ENCODE measurements at regions of chr11 and their contacts with region 1.

Region 1: GRCh38 chr11:74492974-74493790 is at the start of gene LIPT2:
- DNase-seq: peak; percentile 94
- ATAC-seq: peak; percentile 95
- H3K4me3 Mint-ChIP-seq: peak within 1 kb of the TSS; percentile 85
- H3K27ac Mint-ChIP-seq: peak within 1 kb of the TSS; percentile 85
- H3K4me1 Mint-ChIP-seq: peaks cover 19% of the 10 kb centered on the region
- H3K27me3 Mint-ChIP-seq: no peaks in the 10 kb centered on the region
- CTCF ChIP-seq: no peak
- total RNA-seq, gene LIPT2: 4.1 and 5.4 TPM in 2 replicates

Region 2: DNA sequence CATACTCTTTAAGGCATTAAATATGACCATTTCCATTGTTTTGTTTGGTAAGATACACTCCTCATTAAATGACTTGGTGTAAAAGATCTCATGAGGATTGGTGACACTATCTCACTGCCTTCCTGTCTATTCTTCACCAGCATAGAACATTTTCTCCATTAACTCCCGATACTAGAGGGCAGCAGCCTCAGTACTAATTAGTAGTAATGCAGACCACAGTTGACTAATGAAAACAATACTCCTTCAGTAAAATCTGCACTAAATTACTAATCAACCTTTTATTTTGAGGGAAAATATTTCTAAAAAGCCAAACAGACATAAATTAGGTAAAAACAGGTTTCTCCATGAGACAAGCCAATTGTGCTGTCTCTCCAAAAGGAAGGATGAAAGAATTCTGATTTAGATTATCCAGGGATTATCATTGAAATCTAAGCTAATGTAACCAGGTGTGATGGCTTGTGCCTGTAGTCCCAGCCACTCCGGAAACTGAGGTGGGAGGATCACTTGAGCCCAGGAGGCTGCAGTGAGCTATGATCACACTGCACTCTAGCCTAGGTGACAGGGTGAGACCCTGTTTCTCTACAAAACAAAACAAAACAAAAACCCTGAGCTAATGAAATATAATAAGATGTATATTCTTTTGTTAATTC is 104.4 kb before region 1 on chr11:
- CTCF ChIA-PET with region 1: interaction called, 3 read pairs
- POLR2A ChIA-PET with region 1: interaction called, 19 read pairs
- intact Hi-C with region 1: no loop called
- DNase-seq: no peak
- ATAC-seq: peak; percentile 81
- H3K4me3 Mint-ChIP-seq: no peak overlapping the region
- H3K27ac Mint-ChIP-seq: no peak overlapping the region
- H3K4me1 Mint-ChIP-seq: peaks cover 2% of the 10 kb centered on the region
- H3K27me3 Mint-ChIP-seq: no peaks in the 10 kb centered on the region
- CTCF ChIP-seq: peak; percentile 73

Region 3: DNA sequence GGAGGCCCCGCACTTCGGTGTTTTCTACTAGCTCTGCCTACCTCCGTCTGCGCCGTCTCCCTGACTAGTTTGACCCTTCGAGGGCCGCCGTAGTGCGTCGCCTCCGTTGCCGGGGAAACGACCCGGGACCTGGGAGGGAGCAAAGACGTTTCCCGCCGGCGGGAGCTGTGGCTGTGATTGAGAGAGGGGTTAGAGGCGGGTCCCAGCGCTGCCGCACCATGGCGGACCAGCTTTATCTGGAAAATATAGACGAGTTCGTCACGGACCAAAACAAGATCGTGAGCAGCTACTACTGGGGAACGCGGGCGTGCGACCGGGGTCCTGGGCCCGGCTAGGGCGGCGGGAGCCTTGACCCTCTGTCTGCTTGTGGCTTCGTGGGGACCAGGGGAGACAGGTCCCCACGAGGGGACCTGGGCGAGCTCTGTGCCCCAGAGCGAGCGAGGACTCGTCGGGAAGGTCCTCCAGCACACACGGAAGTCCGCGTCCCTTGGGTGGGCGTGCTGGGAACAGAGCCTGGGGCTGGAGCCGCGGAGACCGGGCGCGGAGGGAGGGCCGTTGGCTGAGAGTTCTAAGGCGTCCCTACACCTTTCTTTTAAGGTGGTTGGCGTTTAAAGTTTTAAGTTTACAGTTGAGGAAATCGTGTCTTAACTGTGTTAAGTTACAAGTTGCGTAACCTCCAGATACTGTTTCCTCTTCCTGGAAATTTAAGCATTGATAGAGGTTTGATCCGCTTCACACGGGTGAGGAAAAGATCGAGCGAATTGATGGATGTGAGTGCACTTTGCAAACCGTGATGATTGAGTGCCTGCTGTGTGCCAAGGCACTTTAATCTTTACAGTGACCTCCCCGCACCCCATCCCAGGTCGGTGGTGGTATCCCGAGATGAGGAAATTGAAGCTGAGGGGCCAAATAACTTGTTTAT is 99.5 kb after region 1 on chr11 and contains the start of gene POLD3:
- CTCF ChIA-PET with region 1: no interaction called
- POLR2A ChIA-PET with region 1: interaction called, 18 read pairs
- intact Hi-C with region 1: loop called (anchors 1 kb)
- DNase-seq: peak; percentile 83
- ATAC-seq: peak; percentile 99
- H3K4me3 Mint-ChIP-seq: peak within 1 kb of the TSS; percentile 94
- H3K27ac Mint-ChIP-seq: peak within 1 kb of the TSS; percentile 86
- H3K4me1 Mint-ChIP-seq: peaks cover 17% of the 10 kb centered on the region
- H3K27me3 Mint-ChIP-seq: no peaks in the 10 kb centered on the region
- CTCF ChIP-seq: no peak
- total RNA-seq, gene POLD3: 14.9 and 16.3 TPM in 2 replicates

Region 4: GRCh38 chr11:74948898-74949747 is 455.9 kb after region 1 on chr11 and contains the starts of genes SPCS2 and XRRA1:
- CTCF ChIA-PET with region 1: no interaction called
- POLR2A ChIA-PET with region 1: interaction called, 5 read pairs
- intact Hi-C with region 1: loop called (anchors 2 kb)
- DNase-seq: peak; percentile 90
- ATAC-seq: peak; percentile 93
- H3K4me3 Mint-ChIP-seq: peak within 1 kb of the TSS; percentile 97
- H3K27ac Mint-ChIP-seq: peak within 1 kb of the TSS; percentile 97
- H3K4me1 Mint-ChIP-seq: peaks cover 72% of the 10 kb centered on the region
- H3K27me3 Mint-ChIP-seq: no peaks in the 10 kb centered on the region
- CTCF ChIP-seq: no peak
- total RNA-seq, gene SPCS2: 129 and 138 TPM in 2 replicates
- total RNA-seq, gene XRRA1: 40.0 and 50.5 TPM in 2 replicates

Measured in activated B cell treated with CpG ODN at 0.5 μM for 24 hours (primary cell).